HEK293 (cell line): ENCODE measurements at regions of chr12 and their contacts with region 1.

Region 1: GRCh38 chr12:13211859-13212664 is 15.5 kb downstream of the EMP1 start:
- H3K4me3 ChIP-seq: no peak overlapping the region
- H3K27ac ChIP-seq: no peak overlapping the region
- H3K4me1 ChIP-seq: no peaks in the 10 kb centered on the region
- CTCF ChIP-seq: peak; percentile 63; the same call in 1 of the 2 replicates

Region 2: DNA sequence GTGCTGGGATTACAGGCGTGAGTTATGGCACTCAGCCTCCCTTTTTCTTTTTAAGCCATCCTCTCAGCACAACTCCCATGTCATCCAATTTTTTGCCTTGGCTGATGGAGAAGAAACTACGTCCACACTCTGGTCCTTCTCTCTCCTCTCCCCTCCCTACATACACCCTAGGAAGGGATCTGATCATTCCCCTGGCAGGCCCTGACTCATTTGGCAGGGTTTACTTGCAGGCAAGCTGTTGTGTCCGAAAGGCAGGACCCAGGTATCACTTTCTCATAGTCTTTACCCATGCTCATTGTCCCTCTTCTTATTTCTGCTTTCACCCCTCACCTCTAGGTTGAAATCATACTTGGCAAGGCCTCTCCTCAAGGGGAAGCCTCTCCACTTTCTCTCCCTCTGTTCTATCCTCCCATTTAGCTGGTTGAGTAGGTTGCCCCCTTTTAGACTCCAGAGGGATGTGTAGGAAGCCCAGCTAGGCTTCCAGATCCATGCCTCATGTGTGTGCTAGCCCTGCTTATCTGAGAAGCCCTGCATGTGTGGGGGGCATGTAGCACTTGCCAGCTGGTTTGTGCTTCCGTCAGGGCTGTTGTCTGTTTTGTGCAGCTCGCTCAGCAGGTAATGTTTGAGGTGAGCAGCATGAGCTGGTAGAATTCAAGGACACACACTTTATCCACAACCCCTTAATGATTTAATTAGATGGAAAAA is 530.8 kb before region 1 on chr12:
- CTCF ChIA-PET with region 1: no interaction called
- POLR2A ChIA-PET with region 1: no interaction called
- H3K4me3 ChIP-seq: no peak overlapping the region
- H3K27ac ChIP-seq: no peak overlapping the region
- H3K4me1 ChIP-seq: no peaks in the 10 kb centered on the region
- CTCF ChIP-seq: no peak

Region 3: GRCh38 chr12:12786716-12787601 is 425.1 kb before region 1 on chr12:
- CTCF ChIA-PET with region 1: interaction called, 12 read pairs
- POLR2A ChIA-PET with region 1: no interaction called
- H3K4me3 ChIP-seq: peak overlapping the region; percentile 44
- H3K27ac ChIP-seq: peak overlapping the region; percentile 72; the same call in 1 of the 2 replicates
- H3K4me1 ChIP-seq: peaks cover 26% of the 10 kb centered on the region
- CTCF ChIP-seq: no peak

Region 4: GRCh38 chr12:12916135-12916944 is 295.7 kb before region 1 on chr12:
- CTCF ChIA-PET with region 1: interaction called, 33 read pairs
- POLR2A ChIA-PET with region 1: no interaction called
- H3K4me3 ChIP-seq: no peak overlapping the region
- H3K27ac ChIP-seq: no peak overlapping the region
- H3K4me1 ChIP-seq: peaks cover 6% of the 10 kb centered on the region; the same call in 1 of the 2 replicates
- CTCF ChIP-seq: peak; percentile 95

Region 5: DNA sequence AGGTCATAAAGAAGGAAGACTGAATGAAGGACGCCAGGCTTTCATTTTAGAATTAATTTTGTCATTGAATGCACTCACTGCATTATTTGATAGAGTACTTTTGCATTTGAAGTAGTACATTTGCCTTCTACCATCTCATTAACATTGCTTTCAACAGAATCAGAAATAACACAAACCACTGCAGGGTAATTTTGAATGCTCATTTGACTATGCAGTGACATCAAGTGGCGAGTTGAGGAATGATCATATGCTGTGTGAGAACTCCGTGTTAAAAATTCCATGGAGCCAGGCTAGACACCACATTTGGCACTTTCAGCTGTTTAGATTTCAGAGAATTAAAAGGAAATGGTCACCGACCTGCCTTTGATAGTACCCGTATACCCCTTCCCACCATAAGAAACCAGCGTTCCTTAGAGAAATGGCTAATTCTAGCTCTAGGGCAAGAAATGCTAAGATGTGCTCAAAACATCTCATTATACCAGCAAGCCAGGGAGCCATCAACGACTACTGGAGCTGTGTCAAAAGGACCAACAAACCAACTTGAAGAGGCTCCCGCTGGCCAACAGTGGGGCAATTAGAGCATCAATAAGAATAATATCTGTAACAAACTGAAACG is 228.5 kb before region 1 on chr12:
- CTCF ChIA-PET with region 1: interaction called, 56 read pairs
- POLR2A ChIA-PET with region 1: interaction called, 3 read pairs
- H3K4me3 ChIP-seq: no peak overlapping the region
- H3K27ac ChIP-seq: no peak overlapping the region
- H3K4me1 ChIP-seq: no peaks in the 10 kb centered on the region
- CTCF ChIP-seq: no peak

Region 6: DNA sequence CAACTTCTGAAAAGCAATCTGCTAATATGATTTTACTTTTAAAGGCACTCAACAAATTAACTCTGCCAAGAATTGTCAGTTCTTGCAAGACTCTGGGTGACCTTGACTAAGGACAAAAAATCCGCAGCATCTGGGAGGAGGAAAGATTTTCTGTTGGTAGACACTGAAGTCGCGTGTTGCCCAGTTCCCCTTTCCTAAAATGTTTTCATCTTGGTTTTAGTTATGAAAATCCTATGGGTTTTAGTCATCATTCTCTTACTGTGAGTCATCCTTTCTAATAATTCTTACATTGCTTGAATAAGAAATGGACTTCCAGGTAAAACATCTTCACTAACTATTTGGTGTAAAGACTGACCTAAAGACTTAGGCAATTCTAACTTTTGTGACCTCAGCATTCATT is 117.7 kb before region 1 on chr12:
- CTCF ChIA-PET with region 1: interaction called, 71 read pairs
- POLR2A ChIA-PET with region 1: interaction called, 5 read pairs
- H3K4me3 ChIP-seq: no peak overlapping the region
- H3K27ac ChIP-seq: 0 out of 2 replicates have a peak overlapping the region, but pooled peaks have one; percentile 47
- H3K4me1 ChIP-seq: peaks cover 30% of the 10 kb centered on the region
- CTCF ChIP-seq: no peak

Region 7: DNA sequence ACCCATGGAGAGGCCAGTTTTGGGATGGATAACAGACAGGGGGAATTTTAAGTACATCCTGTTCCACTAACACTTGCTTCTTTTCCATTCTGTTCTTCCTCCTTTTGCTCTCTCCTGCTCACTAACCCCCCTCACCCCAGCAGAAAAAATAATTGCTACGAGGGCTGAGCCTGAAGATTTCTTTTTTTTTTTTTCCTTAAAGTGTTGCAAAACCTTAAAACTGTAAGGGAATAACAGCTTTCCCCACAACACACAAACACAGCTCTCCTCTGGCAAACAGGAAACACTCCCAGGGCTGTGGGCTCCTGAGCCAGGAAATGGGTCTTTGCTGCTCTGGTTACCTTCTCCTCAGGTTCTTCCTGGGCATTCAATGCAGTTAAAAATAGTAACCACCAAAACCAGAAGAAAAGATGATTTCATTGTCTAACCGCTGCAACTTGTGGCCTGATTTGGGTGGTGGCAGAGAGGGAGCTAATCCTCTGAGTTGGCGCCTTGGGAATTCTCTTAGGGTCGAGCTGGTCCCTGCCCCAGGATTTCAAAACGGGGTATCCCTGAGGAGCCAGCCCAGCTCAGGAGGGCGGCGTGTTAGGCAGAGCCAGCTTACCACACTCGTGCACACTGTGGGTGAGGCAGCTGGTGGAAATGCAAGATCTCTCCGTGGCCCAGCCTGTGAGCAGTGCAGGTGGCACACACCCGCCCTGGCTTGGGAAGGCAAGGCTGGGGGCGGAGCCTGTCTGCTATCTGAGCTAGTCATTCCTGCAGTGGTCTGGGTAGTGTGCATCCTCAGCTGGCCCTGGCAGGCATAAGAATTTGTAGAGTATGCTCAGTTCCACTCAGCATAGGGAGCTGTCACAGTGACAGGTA is 32.6 kb before region 1 on chr12:
- CTCF ChIA-PET with region 1: interaction called, 10 read pairs
- POLR2A ChIA-PET with region 1: no interaction called
- H3K4me3 ChIP-seq: peak overlapping the region; percentile 3
- H3K27ac ChIP-seq: peak overlapping the region; percentile 26; the same call in 1 of the 2 replicates
- H3K4me1 ChIP-seq: peaks cover 10% of the 10 kb centered on the region
- CTCF ChIP-seq: no peak

Region 8: DNA sequence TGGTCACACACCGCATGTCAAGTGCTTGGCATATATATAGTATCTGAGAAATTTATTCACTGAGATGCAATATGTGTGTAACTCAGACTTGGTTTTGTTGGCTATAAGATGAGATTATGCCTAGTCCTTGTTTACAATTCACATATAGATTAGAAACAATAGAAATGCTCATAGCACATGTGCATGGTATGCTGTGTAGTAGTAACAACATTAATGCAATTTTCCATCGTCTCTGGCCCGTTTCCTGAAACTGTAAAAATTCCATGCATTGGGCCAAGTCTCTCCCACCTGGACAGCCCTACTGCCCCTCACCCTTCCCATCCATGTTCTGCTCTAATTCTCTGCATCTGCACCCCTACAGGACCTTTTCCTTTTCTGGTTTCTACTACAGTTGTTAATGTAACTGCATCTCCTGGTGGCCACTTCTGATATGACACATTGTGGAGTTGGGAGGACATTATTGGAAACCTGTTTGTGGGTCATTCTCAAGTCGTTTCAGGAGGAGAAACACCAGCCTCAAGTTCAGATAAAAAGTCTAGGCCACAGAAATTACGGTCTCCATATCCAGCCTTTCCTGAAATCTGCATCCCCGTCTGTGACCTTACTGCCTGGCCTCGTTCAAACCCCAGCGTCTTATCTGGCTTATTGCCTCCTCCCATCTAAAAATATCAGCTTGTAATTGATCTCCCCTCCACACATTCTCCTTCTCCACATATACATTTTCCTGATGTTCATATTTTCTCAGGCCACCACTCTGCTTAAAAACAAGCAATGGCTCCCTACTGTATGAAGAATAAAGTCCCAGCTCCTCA is 22.0 kb after region 1 on chr12:
- CTCF ChIA-PET with region 1: interaction called, 30 read pairs
- POLR2A ChIA-PET with region 1: no interaction called
- H3K4me3 ChIP-seq: no peak overlapping the region
- H3K27ac ChIP-seq: no peak overlapping the region
- H3K4me1 ChIP-seq: no peaks in the 10 kb centered on the region
- CTCF ChIP-seq: peak; percentile 14; the same call in 1 of the 2 replicates

Region 9: GRCh38 chr12:13390381-13390861 is 178.4 kb after region 1 on chr12:
- CTCF ChIA-PET with region 1: no interaction called
- POLR2A ChIA-PET with region 1: no interaction called
- H3K4me3 ChIP-seq: no peak overlapping the region
- H3K27ac ChIP-seq: no peak overlapping the region
- H3K4me1 ChIP-seq: no peaks in the 10 kb centered on the region; the same call in 1 of the 2 replicates
- CTCF ChIP-seq: no peak